Naive thymus-derived CD4-positive, alpha-beta T cell (primary cell): ENCODE measurements at regions of chr17 and their contacts with region 1.

Region 1: GRCh38 chr17:31321481-31321880 is at the start of gene EVI2A:
- DNase-seq: peak; percentile 30 to 95 (median 87)
- ATAC-seq: peak; percentile 93
- H3K4me3 ChIP-seq: peak within 1 kb of the TSS; percentile 66
- H3K4me3 Mint-ChIP-seq: peak within 1 kb of the TSS; percentile 78 to 96 (median 89)
- H3K27ac ChIP-seq: peak within 1 kb of the TSS; percentile 90
- H3K27ac Mint-ChIP-seq: peak within 1 kb of the TSS; percentile 88 to 98 (median 94)
- H3K4me1 ChIP-seq: peaks cover 11 to 28% of the 10 kb centered on the region in 2 donors
- H3K4me1 Mint-ChIP-seq: peaks cover 26 to 41% (median 34%) of the 10 kb centered on the region in 7 donors
- H3K27me3 ChIP-seq: no peaks in the 10 kb centered on the region
- H3K27me3 Mint-ChIP-seq: no peaks in the 10 kb centered on the region
- total RNA-seq, gene EVI2A: 40.9 to 134 (median 60.2) TPM

Region 2: GRCh38 chr17:30906101-30906911 is 415.2 kb before region 1 on chr17 and contains the start of gene TEFM:
- CTCF ChIA-PET with region 1: no interaction called
- POLR2A ChIA-PET with region 1: no interaction called
- intact Hi-C with region 1: loop called in 1 of 2 experiments (anchors 1 kb)
- DNase-seq: peak; percentile 71 to 86 (median 80)
- ATAC-seq: peak; percentile 98
- H3K4me3 ChIP-seq: peak within 1 kb of the TSS; percentile 96
- H3K4me3 Mint-ChIP-seq: peak within 1 kb of the TSS; percentile 88 to 99 (median 92)
- H3K27ac ChIP-seq: peak within 1 kb of the TSS; percentile 88
- H3K27ac Mint-ChIP-seq: peak within 1 kb of the TSS; percentile 77 to 99 (median 92)
- H3K4me1 ChIP-seq: peaks cover 9 to 13% of the 10 kb centered on the region in 2 donors
- H3K4me1 Mint-ChIP-seq: peaks cover 33 to 65% (median 56%) of the 10 kb centered on the region in 7 donors
- H3K27me3 ChIP-seq: no peaks in the 10 kb centered on the region
- H3K27me3 Mint-ChIP-seq: no peaks in the 10 kb centered on the region
- total RNA-seq, gene TEFM: 8.5 to 22.1 (median 16.5) TPM

Region 3: GRCh38 chr17:31216053-31216751 is 105.3 kb before region 1 on chr17:
- CTCF ChIA-PET with region 1: no interaction called
- POLR2A ChIA-PET with region 1: interaction called, 5 read pairs
- intact Hi-C with region 1: loop called in 1 of 2 experiments (anchors 2 kb)
- DNase-seq: peak in 5 of 9 donors; percentile 28 to 40 (median 32)
- ATAC-seq: no peak
- H3K4me3 ChIP-seq: no peak overlapping the region
- H3K4me3 Mint-ChIP-seq: no peak overlapping the region
- H3K27ac ChIP-seq: no peak overlapping the region
- H3K27ac Mint-ChIP-seq: no peak overlapping the region
- H3K4me1 ChIP-seq: no peaks in the 10 kb centered on the region
- H3K4me1 Mint-ChIP-seq: peaks cover 0 to 4% (median 0%) of the 10 kb centered on the region in 7 donors
- H3K27me3 ChIP-seq: no peaks in the 10 kb centered on the region
- H3K27me3 Mint-ChIP-seq: no peaks in the 10 kb centered on the region

Region 4: GRCh38 chr17:31308372-31309334 is 12.8 kb before region 1 on chr17:
- CTCF ChIA-PET with region 1: interaction called, 9 read pairs
- POLR2A ChIA-PET with region 1: interaction called, 73 read pairs
- intact Hi-C with region 1: loop called (anchors 1 kb)
- DNase-seq: peak in 3 of 9 donors; percentile 13 to 56 (median 22)
- ATAC-seq: peak; percentile 46
- H3K4me3 ChIP-seq: peak overlapping the region; percentile 63
- H3K4me3 Mint-ChIP-seq: peak overlapping the region; percentile 38 to 95 (median 92)
- H3K27ac ChIP-seq: peak overlapping the region; percentile 82
- H3K27ac Mint-ChIP-seq: peak overlapping the region; percentile 94 to 99 (median 95)
- H3K4me1 ChIP-seq: peaks cover 27 to 33% of the 10 kb centered on the region in 2 donors
- H3K4me1 Mint-ChIP-seq: peaks cover 40 to 64% (median 56%) of the 10 kb centered on the region in 7 donors
- H3K27me3 ChIP-seq: no peaks in the 10 kb centered on the region
- H3K27me3 Mint-ChIP-seq: no peaks in the 10 kb centered on the region

Region 5: DNA sequence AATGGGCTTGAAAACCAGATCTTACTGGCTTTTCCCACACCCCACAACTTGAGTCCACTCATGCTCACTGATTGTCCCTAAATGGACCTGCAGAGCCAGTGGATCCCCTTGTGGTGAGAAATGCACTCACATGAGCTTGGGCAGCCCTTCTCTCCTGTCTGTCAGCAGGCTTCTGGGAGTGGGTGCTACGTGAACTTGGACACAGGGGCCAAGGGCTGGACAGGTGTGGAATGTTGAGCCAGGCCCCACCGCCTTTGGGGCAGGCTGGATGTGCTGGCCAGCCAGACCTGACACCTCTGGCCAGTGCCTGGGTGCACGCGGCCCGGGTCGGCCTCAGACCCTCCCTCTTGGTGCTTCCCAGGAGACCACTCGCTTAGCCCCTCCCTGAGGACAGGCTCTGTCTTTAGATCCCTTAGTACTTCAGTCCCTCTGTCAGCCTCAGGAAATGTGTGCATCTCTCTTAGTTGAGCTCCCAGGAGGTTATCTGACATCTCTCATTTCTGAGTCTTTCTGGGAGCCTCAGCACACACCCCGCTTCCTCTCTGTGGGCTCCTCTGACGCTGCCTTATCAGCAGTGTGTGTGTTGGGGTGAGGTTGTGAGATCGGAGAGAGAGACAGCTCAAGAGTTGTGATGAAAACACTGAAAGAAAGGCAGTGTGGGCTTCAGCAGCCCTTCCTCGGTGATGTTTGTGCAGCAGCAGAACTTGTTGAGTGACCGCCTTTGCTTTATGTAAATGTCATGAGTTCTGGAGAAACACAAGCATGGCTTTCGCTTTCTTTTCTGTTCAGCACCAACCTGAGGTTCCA is 187.0 kb after region 1 on chr17:
- CTCF ChIA-PET with region 1: no interaction called
- POLR2A ChIA-PET with region 1: interaction called, 4 read pairs
- intact Hi-C with region 1: loop called in 1 of 2 experiments (anchors 2 kb)
- DNase-seq: peak in 8 of 9 donors; percentile 66 to 90 (median 85)
- ATAC-seq: peak; percentile 95
- H3K4me3 ChIP-seq: peak overlapping the region; percentile 62
- H3K4me3 Mint-ChIP-seq: peak overlapping the region; percentile 79 to 95 (median 90)
- H3K27ac ChIP-seq: peak overlapping the region; percentile 86
- H3K27ac Mint-ChIP-seq: peak overlapping the region; percentile 94 to 100 (median 97)
- H3K4me1 ChIP-seq: peaks cover 53 to 55% of the 10 kb centered on the region in 2 donors
- H3K4me1 Mint-ChIP-seq: peaks cover 50 to 80% (median 69%) of the 10 kb centered on the region in 7 donors
- H3K27me3 ChIP-seq: no peaks in the 10 kb centered on the region
- H3K27me3 Mint-ChIP-seq: no peaks in the 10 kb centered on the region